Panc1 (cell line): ENCODE measurements at regions of chr11 and their contacts with region 1.

Region 1: DNA sequence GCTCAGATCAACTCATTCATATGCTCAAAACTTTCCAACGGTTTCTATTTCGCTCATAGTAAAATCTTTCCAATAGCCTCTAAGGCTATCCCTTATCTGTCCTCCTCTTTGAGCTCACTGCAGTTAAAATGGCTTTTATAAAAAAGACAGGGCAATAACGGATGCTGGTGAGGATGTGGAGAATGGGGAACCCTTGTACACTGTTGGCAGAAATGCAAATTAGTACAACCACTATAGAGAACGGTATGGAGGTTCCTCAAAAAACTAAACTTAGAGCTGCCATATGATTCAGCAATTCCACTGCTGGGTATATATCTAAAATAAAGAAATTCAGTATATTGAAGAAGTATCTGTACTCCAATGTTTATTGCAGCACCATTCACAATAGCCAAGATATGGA is 345.6 kb downstream of the DLG2 start:
- DNase-seq: no peak
- ATAC-seq: no peak
- H3K4me3 ChIP-seq: no peak overlapping the region
- H3K27ac ChIP-seq: no peak overlapping the region
- H3K4me1 ChIP-seq: no peaks in the 10 kb centered on the region
- H3K27me3 ChIP-seq: 0 out of 2 replicates have a peak, but pooled peaks cover 3% of the 10 kb centered on the region
- CTCF ChIP-seq: no peak

Region 2: DNA sequence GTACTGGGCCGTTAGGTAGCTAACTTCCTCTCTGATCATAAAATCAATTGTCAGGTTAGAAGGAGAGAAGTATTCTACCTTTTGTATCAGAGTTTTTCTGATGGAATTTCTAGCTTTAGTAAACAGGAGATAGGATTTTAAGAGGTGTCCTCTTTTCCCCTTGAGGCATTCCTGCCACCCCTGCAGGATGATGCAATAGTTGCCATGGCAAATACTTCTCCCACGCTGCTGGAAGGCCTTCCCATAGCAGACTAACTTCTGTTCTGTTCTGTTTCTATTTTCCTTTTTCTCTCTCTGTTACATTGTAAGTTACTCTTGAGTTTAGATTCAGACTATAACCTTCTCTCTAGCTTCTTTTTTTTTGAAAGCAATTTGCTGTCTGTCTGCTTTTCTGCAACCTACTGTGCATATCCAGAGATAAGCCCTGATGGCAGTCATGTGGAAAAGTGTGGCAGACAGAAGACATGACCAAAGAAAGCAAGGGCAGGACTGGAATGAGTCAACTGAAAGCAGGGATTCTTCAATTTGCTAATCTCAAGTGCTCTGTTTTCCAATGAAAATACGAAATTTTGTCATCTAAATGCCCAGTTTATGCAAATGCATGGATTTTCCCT is 333.5 kb before region 1 on chr11:
- CTCF ChIA-PET with region 1: no interaction called
- POLR2A ChIA-PET with region 1: no interaction called
- in situ Hi-C with region 1: no loop called
- intact Hi-C with region 1: no loop called
- DNase-seq: no peak
- ATAC-seq: no peak
- H3K4me3 ChIP-seq: no peak overlapping the region
- H3K27ac ChIP-seq: no peak overlapping the region
- H3K4me1 ChIP-seq: no peaks in the 10 kb centered on the region
- H3K27me3 ChIP-seq: no peaks in the 10 kb centered on the region
- CTCF ChIP-seq: no peak

Region 3: DNA sequence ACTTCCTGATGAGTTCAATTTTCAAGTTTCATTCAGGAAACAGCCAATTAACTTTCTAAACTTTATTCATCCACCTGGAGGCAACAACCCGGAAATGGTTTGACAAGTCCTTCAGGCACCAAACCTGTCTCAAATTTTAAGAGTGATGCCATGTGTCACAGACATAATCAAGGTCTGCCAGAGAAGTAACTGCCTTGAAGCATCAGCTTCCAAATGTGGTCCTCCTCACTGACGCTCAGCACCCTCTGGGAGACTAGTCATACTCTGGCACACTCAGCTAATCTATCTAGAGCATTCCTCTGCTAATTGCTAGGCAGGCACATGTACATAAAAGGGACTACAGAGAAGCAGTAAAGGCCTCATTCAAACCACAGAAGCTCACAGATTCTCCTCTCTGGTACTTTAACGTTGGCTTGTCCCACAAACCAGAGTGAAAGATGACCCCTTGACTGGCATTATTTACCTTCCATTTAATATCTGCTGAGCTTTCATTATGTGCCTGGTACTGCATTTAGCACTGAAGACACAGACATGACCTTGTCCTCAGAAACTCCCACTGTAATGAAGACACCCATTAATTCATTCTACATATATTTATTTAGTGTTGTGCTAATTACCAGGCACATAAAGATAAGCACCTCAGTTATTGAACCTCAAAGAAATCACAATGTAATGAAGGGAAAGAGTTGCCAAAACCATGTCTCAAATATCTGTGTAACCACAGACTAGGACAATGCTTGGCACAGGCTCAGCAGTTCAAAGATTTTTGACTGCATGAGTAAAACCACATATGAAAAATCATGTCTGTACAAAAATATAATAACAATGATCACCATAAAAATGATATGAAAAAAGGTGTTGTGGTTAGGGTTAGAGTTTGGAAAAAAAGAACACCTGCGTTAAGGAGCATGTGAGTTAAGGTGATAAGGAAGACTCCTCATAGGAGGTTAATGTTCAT is 204.9 kb before region 1 on chr11:
- CTCF ChIA-PET with region 1: no interaction called
- POLR2A ChIA-PET with region 1: no interaction called
- in situ Hi-C with region 1: no loop called
- intact Hi-C with region 1: no loop called
- DNase-seq: no peak
- ATAC-seq: no peak
- H3K4me3 ChIP-seq: no peak overlapping the region
- H3K27ac ChIP-seq: no peak overlapping the region
- H3K4me1 ChIP-seq: no peaks in the 10 kb centered on the region
- H3K27me3 ChIP-seq: no peaks in the 10 kb centered on the region
- CTCF ChIP-seq: no peak

Region 4: DNA sequence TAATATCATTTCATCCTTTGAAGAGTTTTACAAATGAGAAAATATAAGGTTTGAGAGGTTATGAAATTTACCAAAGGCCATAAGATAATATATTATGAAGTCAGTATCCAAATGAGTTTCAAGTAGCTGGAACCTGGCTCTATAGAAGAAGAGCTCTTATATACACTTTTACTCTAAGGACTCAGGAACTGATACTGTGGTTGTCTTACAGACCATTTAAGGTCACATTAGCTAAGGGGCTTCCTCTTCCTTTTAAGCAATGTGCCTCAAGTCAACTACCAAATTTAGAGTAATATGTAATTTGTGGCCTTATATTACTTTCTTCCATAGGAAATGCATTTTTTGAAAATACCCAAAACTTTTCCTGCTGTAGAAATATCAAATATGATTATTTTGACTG is 23.7 kb before region 1 on chr11:
- CTCF ChIA-PET with region 1: no interaction called
- POLR2A ChIA-PET with region 1: no interaction called
- in situ Hi-C with region 1: no loop called
- intact Hi-C with region 1: no loop called
- DNase-seq: no peak
- ATAC-seq: no peak
- H3K4me3 ChIP-seq: no peak overlapping the region
- H3K27ac ChIP-seq: no peak overlapping the region
- H3K4me1 ChIP-seq: no peaks in the 10 kb centered on the region
- H3K27me3 ChIP-seq: no peaks in the 10 kb centered on the region
- CTCF ChIP-seq: no peak

Region 5: DNA sequence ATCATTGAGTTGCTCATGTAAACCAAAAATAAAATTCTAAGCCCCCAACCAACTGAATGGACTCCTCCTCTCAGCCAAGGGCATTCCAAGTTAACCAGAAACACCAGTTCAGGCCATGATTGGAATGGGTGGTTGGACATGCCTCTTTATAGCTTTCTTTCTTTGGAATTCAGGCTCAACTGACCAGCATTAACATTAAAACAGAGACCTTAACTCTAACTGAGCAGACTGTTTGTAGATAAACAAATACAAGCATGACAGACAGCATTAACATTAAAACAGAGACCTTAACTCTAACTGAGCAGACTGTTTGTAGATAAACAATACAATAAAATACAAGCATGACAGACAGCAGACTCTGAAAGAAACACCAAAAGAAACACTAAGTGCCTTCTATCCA is 67.4 kb after region 1 on chr11:
- CTCF ChIA-PET with region 1: no interaction called
- POLR2A ChIA-PET with region 1: no interaction called
- in situ Hi-C with region 1: no loop called
- intact Hi-C with region 1: loop called (anchors 10 kb)
- DNase-seq: no peak
- ATAC-seq: no peak
- H3K4me3 ChIP-seq: no peak overlapping the region
- H3K27ac ChIP-seq: no peak overlapping the region
- H3K4me1 ChIP-seq: no peaks in the 10 kb centered on the region
- H3K27me3 ChIP-seq: no peaks in the 10 kb centered on the region
- CTCF ChIP-seq: no peak

Region 6: GRCh38 chr11:86124834-86125233 is 843.3 kb after region 1 on chr11:
- CTCF ChIA-PET with region 1: no interaction called
- POLR2A ChIA-PET with region 1: no interaction called
- in situ Hi-C with region 1: no loop called
- intact Hi-C with region 1: no loop called
- DNase-seq: no peak
- ATAC-seq: no peak
- H3K4me3 ChIP-seq: no peak overlapping the region
- H3K27ac ChIP-seq: no peak overlapping the region
- H3K4me1 ChIP-seq: no peaks in the 10 kb centered on the region
- H3K27me3 ChIP-seq: peaks cover 2% of the 10 kb centered on the region; the same call in 1 of the 2 replicates
- CTCF ChIP-seq: no peak; the same call in 1 of the 2 replicates